ENCODE measurements at regions of chr11 and their contacts with region 1.

Region 1: DNA sequence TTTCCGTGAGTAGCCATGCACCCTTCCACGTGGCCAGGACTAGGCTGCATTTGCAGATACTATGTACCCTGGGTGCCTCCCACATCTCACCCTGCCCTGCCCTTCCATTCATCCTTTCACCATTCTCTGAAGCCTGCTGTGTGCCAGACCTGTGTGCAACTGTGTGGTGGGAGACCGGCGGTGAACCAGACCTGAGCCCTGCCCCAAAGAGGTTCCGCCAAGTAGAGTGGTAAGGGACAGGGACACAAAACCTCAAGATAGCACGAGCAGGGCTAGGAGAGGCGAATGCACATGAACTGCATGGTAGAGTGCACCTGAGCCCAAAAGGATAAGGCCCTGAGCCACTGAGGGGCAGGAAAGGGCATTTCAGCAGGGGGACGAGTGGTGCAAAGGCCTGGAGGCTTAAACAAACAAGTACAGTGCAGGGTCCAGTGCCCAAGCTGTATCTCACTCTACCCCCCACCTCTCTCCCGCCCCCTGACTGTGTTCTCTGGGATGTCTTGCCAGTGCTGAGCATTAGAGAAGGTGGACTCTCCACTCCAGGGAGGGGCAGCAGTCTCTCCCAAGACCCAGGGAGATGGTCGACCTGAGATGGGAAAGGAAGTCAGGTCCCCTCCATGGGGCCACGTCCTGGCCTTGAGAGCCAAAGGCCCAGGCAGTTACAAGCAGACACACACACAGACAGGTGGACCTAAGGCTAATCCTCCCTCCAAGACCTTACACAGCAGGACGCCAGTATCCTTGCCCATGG is 14.1 kb upstream of the ARAP1 start:
- DNase-seq: peak; percentile 85
- ATAC-seq: peak; percentile 95
- H3K4me3 ChIP-seq: peak overlapping the region; percentile 29 to 63 (median 31); a peak in 5 of 6 replicates
- H3K27ac ChIP-seq: peak overlapping the region; percentile 88
- H3K4me1 ChIP-seq: peaks cover 56% of the 10 kb centered on the region
- H3K27me3 ChIP-seq: no peaks in the 10 kb centered on the region
- CTCF ChIP-seq: peak; percentile 70
- EP300 ChIP-seq: peak in 1 of 2 experiments; percentile 54; a peak in 1 of 4 replicates
- POLR2A ChIP-seq: no peak; a peak in 1 of 4 replicates
- RAD21 ChIP-seq: peak; percentile 80

Region 2: GRCh38 chr11:72781313-72782050 is 15.2 kb after region 1 on chr11:
- CTCF ChIA-PET with region 1: no interaction called
- POLR2A ChIA-PET with region 1: interaction called, 52 read pairs
- in situ Hi-C with region 1: no loop called
- intact Hi-C with region 1: loop called (anchors 2 kb)
- DNase-seq: no peak
- ATAC-seq: peak; percentile 7
- H3K4me3 ChIP-seq: peak overlapping the region; percentile 81 to 88 (median 87)
- H3K27ac ChIP-seq: peak overlapping the region; percentile 79
- H3K4me1 ChIP-seq: peaks cover 90% of the 10 kb centered on the region
- H3K27me3 ChIP-seq: no peaks in the 10 kb centered on the region; a peak in 1 of 5 replicates
- CTCF ChIP-seq: no peak
- EP300 ChIP-seq: no peak; a peak in 1 of 4 replicates
- POLR2A ChIP-seq: no peak
- RAD21 ChIP-seq: no peak

Region 3: DNA sequence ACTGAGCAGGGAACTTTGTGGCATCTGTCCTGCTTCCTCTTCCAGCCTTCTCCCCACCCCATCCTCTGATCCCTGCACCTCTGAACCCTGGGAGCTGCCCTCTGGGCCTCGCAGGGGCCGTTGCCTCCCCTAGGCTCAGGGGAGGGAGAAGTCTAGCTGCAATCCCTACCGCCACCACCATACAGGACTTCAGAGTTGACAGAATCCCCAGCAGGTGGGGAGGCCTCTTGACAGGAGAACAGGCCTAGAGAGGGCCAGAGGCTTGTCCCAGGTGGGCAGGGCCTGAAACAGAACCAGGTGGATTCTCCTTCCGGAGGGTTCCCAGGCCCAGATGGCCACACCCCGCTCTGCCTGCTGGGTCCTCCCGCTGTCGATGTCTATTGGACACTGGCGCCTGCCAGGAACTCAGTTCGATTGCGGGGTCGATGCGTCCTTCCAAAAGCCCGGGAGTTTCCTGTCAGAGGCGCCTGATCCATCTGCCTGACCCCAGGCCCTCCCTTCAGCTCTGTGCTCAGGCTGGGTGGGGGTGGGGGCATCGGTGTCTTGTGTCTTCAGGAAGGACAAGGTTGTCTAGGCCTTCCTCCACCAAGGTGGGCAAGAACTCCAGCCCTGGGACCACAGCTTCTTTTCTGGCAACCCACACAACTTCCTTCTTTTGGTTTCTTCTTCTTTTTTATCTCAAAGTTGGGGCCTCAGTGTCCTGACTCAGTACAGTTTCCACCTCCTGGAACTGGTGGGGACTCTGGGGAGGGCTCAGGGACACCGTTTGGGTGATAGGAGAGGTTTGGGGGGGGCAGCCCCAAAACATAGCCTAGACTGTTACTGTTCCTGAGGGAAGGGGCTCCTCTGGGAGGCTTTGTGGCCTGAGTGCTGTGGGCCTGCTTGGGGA is 21.1 kb after region 1 on chr11:
- CTCF ChIA-PET with region 1: no interaction called
- POLR2A ChIA-PET with region 1: interaction called, 25 read pairs
- in situ Hi-C with region 1: no loop called
- intact Hi-C with region 1: loop called (anchors 2 kb)
- DNase-seq: peak; percentile 94
- ATAC-seq: peak; percentile 90
- H3K4me3 ChIP-seq: peak overlapping the region in 2 of 3 experiments; percentile 33 to 57
- H3K27ac ChIP-seq: peak overlapping the region; percentile 72
- H3K4me1 ChIP-seq: peaks cover 95% of the 10 kb centered on the region
- H3K27me3 ChIP-seq: no peaks in the 10 kb centered on the region
- CTCF ChIP-seq: peak; percentile 52
- EP300 ChIP-seq: peak in 1 of 2 experiments; percentile 19; a peak in 1 of 4 replicates
- POLR2A ChIP-seq: peak in 1 of 2 experiments; percentile 38; a peak in 1 of 4 replicates
- RAD21 ChIP-seq: peak; percentile 76

Measured in HepG2 (cell line).